ENCODE measurements at regions of chr5 and their contacts with region 1.

Region 1: GRCh38 chr5:130871346-130872086 is 293.5 kb downstream of the HINT1 start:
- DNase-seq: peak; percentile 40
- H3K4me3 Mint-ChIP-seq: no peak overlapping the region
- H3K27ac Mint-ChIP-seq: no peak overlapping the region
- H3K4me1 Mint-ChIP-seq: peaks cover 8% of the 10 kb centered on the region
- H3K27me3 Mint-ChIP-seq: no peaks in the 10 kb centered on the region

Region 2: DNA sequence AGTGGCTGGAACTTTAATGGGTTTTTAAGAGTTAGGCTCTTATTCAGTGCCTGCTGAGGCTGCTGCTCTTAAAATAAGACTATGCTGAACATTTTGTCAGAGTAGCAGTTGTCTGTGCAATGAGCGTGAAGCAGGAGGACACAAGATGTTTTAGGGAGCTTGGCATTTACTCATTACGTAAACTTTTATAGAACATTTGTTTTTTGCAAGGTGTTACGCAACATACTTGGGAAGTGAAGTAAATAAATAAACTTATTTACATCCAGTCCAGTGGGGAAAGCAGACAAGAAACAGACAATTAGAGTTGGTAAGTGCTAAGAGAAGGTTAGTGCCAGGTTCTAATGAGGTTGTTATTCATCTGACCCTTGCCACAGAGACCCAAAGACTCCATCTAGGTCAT is 67.5 kb after region 1 on chr5:
- CTCF ChIA-PET with region 1: no interaction called
- POLR2A ChIA-PET with region 1: no interaction called
- intact Hi-C with region 1: no loop called
- DNase-seq: no peak
- H3K4me3 Mint-ChIP-seq: no peak overlapping the region
- H3K27ac Mint-ChIP-seq: no peak overlapping the region
- H3K4me1 Mint-ChIP-seq: no peaks in the 10 kb centered on the region
- H3K27me3 Mint-ChIP-seq: no peaks in the 10 kb centered on the region

Region 3: GRCh38 chr5:131109540-131110255 is 238.2 kb after region 1 on chr5:
- CTCF ChIA-PET with region 1: interaction called, 47 read pairs
- POLR2A ChIA-PET with region 1: no interaction called
- intact Hi-C with region 1: loop called (anchors 1 kb)
- DNase-seq: no peak
- H3K4me3 Mint-ChIP-seq: no peak overlapping the region
- H3K27ac Mint-ChIP-seq: no peak overlapping the region
- H3K4me1 Mint-ChIP-seq: peaks cover 3% of the 10 kb centered on the region
- H3K27me3 Mint-ChIP-seq: no peaks in the 10 kb centered on the region

Region 4: GRCh38 chr5:131114754-131115153 is 243.2 kb after region 1 on chr5:
- CTCF ChIA-PET with region 1: interaction called, 47 read pairs
- POLR2A ChIA-PET with region 1: no interaction called
- intact Hi-C with region 1: loop called (anchors 1 kb)
- DNase-seq: no peak
- H3K4me3 Mint-ChIP-seq: no peak overlapping the region
- H3K27ac Mint-ChIP-seq: no peak overlapping the region
- H3K4me1 Mint-ChIP-seq: peaks cover 8% of the 10 kb centered on the region
- H3K27me3 Mint-ChIP-seq: no peaks in the 10 kb centered on the region